Activated CD8-positive, alpha-beta T cell treated with anti-CD3 and anti-CD28 coated beads, Interleukin-2, amount 10 ng/mL, durations not matched to agents 7 days and 5 days (primary cell): ENCODE measurements at regions of chr3 and their contacts with region 1.

Region 1: DNA sequence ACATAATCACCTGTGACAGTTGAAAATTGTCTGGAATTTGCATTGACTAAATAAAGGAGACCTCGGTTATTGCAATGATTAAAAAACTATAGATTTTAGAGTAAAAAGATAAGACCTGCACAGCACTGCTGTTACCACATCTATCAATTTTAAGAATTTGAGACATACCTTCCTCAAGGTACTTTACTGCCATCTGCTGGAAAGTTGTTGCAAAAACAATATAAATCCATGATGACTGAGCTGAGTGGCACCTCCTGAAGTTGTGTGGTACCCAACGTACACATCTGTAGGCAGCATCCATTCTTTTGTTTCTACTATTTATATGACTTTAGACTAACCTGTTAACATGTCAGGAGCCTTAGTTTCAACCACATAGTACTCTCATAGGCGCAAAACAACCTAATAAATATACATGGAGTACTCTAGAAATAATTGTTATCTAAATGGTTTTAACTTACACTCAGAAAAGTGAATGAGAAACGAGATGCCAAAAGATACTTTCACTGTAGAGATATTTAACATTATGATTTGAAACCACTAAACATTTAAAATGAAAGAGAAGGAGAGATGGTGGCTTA is 106.7 kb downstream of the GHSR start:
- DNase-seq: peak; percentile 38
- ATAC-seq: peak; percentile 81
- H3K4me3 Mint-ChIP-seq: no peak overlapping the region
- H3K27ac Mint-ChIP-seq: no peak overlapping the region
- H3K4me1 Mint-ChIP-seq: no peaks in the 10 kb centered on the region
- H3K27me3 Mint-ChIP-seq: no peaks in the 10 kb centered on the region

Region 2: GRCh38 chr3:172034786-172035685 is 306.5 kb before region 1 on chr3:
- CTCF ChIA-PET with region 1: interaction called, 19 read pairs
- POLR2A ChIA-PET with region 1: no interaction called
- DNase-seq: peak; percentile 38
- ATAC-seq: no peak
- H3K4me3 Mint-ChIP-seq: no peak overlapping the region
- H3K27ac Mint-ChIP-seq: no peak overlapping the region
- H3K4me1 Mint-ChIP-seq: peaks cover 5% of the 10 kb centered on the region
- H3K27me3 Mint-ChIP-seq: peaks cover 5% of the 10 kb centered on the region

Region 3: DNA sequence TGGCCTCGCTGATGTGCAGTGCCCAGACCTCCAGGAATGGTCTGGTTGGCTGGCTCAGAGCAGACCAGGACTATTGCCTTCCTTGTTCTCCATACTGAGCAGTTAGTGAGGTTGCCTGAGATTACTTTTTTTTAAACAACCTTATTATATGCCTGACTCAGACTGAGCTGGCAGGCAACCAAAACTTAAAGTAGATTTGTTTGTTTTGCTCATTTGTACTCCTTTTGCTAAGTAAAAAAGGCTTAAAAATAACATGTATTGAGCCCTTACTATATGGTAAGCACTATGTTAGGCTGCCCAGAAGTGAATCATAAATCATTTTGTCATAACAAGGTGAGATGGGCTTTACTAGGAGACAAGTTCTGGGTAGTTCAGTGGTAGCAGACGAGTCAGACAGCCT is 14.3 kb after region 1 on chr3:
- CTCF ChIA-PET with region 1: interaction called, 19 read pairs
- POLR2A ChIA-PET with region 1: no interaction called
- DNase-seq: no peak
- ATAC-seq: no peak
- H3K4me3 Mint-ChIP-seq: no peak overlapping the region
- H3K27ac Mint-ChIP-seq: no peak overlapping the region
- H3K4me1 Mint-ChIP-seq: peaks cover 5% of the 10 kb centered on the region
- H3K27me3 Mint-ChIP-seq: no peaks in the 10 kb centered on the region

Region 4: GRCh38 chr3:172666873-172667694 is 325.5 kb after region 1 on chr3:
- CTCF ChIA-PET with region 1: interaction called, 40 read pairs
- POLR2A ChIA-PET with region 1: no interaction called
- DNase-seq: peak; percentile 90
- ATAC-seq: peak; percentile 100
- H3K4me3 Mint-ChIP-seq: no peak overlapping the region
- H3K27ac Mint-ChIP-seq: no peak overlapping the region
- H3K4me1 Mint-ChIP-seq: peaks cover 19% of the 10 kb centered on the region
- H3K27me3 Mint-ChIP-seq: peaks cover 5% of the 10 kb centered on the region